ENCODE measurements at regions of chr7 and their contacts with region 1.

Region 1: GRCh38 chr7:57821438-57822347 is 371.7 kb downstream of the ZNF716 start:
- DNase-seq: no peak
- ATAC-seq: no peak
- H3K4me3 ChIP-seq: no peak overlapping the region
- H3K4me3 Mint-ChIP-seq: no peak overlapping the region
- H3K27ac ChIP-seq: no peak overlapping the region
- H3K27ac Mint-ChIP-seq: no peak overlapping the region
- H3K4me1 ChIP-seq: no peaks in the 10 kb centered on the region
- H3K4me1 Mint-ChIP-seq: no peaks in the 10 kb centered on the region
- H3K27me3 ChIP-seq: no peaks in the 10 kb centered on the region
- H3K27me3 Mint-ChIP-seq: no peaks in the 10 kb centered on the region
- CTCF ChIP-seq: no peak

Region 2: DNA sequence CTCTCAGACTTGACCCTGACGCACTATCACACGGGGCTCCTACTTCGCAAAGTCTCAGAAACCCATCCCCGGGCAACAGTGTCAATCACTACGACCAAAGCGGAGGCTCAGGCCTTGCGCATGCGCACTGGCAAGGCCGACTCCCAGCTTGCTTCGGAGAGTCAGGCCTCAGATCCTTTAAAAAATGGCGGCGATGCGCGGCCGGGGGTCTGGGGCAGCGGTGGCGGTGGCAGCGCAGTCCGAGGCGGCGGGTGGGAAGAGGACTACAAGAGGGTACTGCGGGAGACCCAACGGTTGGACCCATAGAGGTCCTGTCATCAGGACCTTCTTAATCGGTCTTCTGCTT is 174.8 kb before region 1 on chr7:
- CTCF ChIA-PET with region 1: no interaction called
- POLR2A ChIA-PET with region 1: no interaction called
- intact Hi-C with region 1: loop called in 1 of 2 experiments (anchors 10 kb)
- DNase-seq: no peak
- ATAC-seq: no peak
- H3K4me3 ChIP-seq: no peak overlapping the region
- H3K4me3 Mint-ChIP-seq: no peak overlapping the region
- H3K27ac ChIP-seq: no peak overlapping the region
- H3K27ac Mint-ChIP-seq: no peak overlapping the region
- H3K4me1 ChIP-seq: no peaks in the 10 kb centered on the region
- H3K4me1 Mint-ChIP-seq: no peaks in the 10 kb centered on the region
- H3K27me3 ChIP-seq: no peaks in the 10 kb centered on the region
- H3K27me3 Mint-ChIP-seq: no peaks in the 10 kb centered on the region
- CTCF ChIP-seq: no peak